ENCODE measurements at regions of chr22 and their contacts with region 1.

Region 1: DNA sequence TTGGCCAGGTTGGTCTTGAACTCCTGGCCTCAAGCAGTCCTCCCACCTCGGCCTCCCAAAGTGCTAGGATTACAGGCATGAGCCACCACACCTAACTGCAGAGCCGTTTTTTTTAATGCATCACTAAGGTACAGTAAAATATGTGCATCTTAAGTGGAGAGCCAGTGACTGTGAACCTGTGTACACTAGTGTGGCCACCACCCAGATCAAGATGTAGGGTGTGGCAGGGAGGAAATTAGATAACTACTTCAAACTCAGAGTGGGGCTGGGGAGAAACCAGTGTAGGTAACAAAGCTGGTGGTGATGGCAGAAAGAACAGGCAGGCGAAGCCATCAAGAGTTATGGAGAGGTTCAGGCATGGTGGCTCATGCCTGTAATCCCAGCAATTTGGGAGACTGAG is 14.4 kb downstream of the SNAP29 start:
- DNase-seq: no peak
- ATAC-seq: no peak
- H3K4me3 ChIP-seq: no peak overlapping the region
- H3K4me3 Mint-ChIP-seq: no peak overlapping the region
- H3K27ac ChIP-seq: no peak overlapping the region
- H3K27ac Mint-ChIP-seq: no peak overlapping the region
- H3K4me1 ChIP-seq: no peaks in the 10 kb centered on the region
- H3K4me1 Mint-ChIP-seq: no peaks in the 10 kb centered on the region
- H3K27me3 ChIP-seq: no peaks in the 10 kb centered on the region
- H3K27me3 Mint-ChIP-seq: no peaks in the 10 kb centered on the region
- CTCF ChIP-seq: no peak

Region 2: GRCh38 chr22:20637750-20638506 is 235.3 kb before region 1 on chr22:
- CTCF ChIA-PET with region 1: no interaction called
- POLR2A ChIA-PET with region 1: no interaction called
- intact Hi-C with region 1: loop called in 1 of 2 experiments (anchors 5 kb)
- DNase-seq: no peak
- ATAC-seq: no peak
- H3K4me3 ChIP-seq: no peak overlapping the region
- H3K4me3 Mint-ChIP-seq: no peak overlapping the region
- H3K27ac ChIP-seq: no peak overlapping the region
- H3K27ac Mint-ChIP-seq: no peak overlapping the region
- H3K4me1 ChIP-seq: no peaks in the 10 kb centered on the region
- H3K4me1 Mint-ChIP-seq: no peaks in the 10 kb centered on the region
- H3K27me3 ChIP-seq: peaks cover 0 to 2% of the 10 kb centered on the region in 2 experiments
- H3K27me3 Mint-ChIP-seq: peaks cover 5% of the 10 kb centered on the region
- CTCF ChIP-seq: no peak

Region 3: GRCh38 chr22:20819471-20819870 is 53.7 kb before region 1 on chr22:
- CTCF ChIA-PET with region 1: no interaction called
- POLR2A ChIA-PET with region 1: no interaction called
- intact Hi-C with region 1: no loop called
- DNase-seq: no peak
- ATAC-seq: no peak
- H3K4me3 ChIP-seq: no peak overlapping the region
- H3K4me3 Mint-ChIP-seq: no peak overlapping the region
- H3K27ac ChIP-seq: no peak overlapping the region
- H3K27ac Mint-ChIP-seq: no peak overlapping the region
- H3K4me1 ChIP-seq: no peaks in the 10 kb centered on the region
- H3K4me1 Mint-ChIP-seq: no peaks in the 10 kb centered on the region
- H3K27me3 ChIP-seq: no peaks in the 10 kb centered on the region
- H3K27me3 Mint-ChIP-seq: no peaks in the 10 kb centered on the region
- CTCF ChIP-seq: no peak